SK-N-SH (cell line): ENCODE measurements at regions of chr7 and their contacts with region 1.

Region 1: GRCh38 chr7:157273208-157274093 is 63.4 kb upstream of the DNAJB6 start:
- DNase-seq: peak; percentile 99
- H3K4me3 ChIP-seq: no peak overlapping the region; a peak in 1 of 4 replicates
- H3K27ac ChIP-seq: no peak overlapping the region
- H3K4me1 ChIP-seq: peaks cover 24 to 27% of the 10 kb centered on the region in 2 experiments; a peak in 3 of 4 replicates
- H3K27me3 ChIP-seq: no peaks in the 10 kb centered on the region
- CTCF ChIP-seq: peak; percentile 99
- EP300 ChIP-seq: no peak
- RAD21 ChIP-seq: peak; percentile 97

Region 2: GRCh38 chr7:156969972-156970420 is 303.5 kb before region 1 on chr7:
- CTCF ChIA-PET with region 1: interaction called, 120 read pairs
- POLR2A ChIA-PET with region 1: no interaction called
- DNase-seq: no peak
- H3K4me3 ChIP-seq: no peak overlapping the region
- H3K27ac ChIP-seq: no peak overlapping the region
- H3K4me1 ChIP-seq: no peaks in the 10 kb centered on the region
- H3K27me3 ChIP-seq: no peaks in the 10 kb centered on the region
- CTCF ChIP-seq: peak; percentile 74
- EP300 ChIP-seq: no peak
- RAD21 ChIP-seq: peak; percentile 56

Region 3: DNA sequence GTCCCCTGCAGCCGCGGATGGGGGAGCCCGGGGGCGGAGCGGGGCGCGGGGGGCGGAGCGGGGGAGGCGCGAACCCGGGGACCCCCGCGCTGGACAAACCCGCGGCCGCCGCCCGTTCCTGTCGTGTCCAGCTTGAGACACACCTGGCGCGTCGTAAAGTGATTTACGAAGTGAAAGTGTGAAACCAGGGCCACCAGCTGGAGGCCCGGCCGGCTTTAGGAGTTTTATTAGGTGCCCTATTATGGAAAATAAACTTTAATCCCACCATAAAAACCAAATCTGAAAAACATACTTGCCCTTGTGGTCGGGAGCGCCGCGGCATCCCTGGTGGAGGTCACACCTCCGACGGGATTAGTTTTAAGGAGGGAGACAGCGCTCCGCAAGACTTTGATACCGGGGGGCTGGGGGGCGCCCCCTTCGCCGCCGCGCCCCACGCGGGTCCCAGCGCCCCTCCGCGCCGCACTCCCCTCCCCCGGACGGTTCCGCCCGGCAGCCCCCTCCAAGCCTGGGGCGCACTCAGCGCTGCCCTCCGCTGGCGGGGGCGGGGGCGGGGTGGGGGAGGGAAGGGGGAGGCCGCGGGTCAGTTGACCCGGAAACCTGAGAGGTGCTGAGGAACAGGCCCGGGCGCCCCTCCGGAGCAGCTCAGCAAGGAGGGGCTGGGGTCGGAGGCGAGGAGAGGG is 273.3 kb before region 1 on chr7:
- CTCF ChIA-PET with region 1: interaction called, 15 read pairs
- POLR2A ChIA-PET with region 1: no interaction called
- DNase-seq: peak; percentile 58
- H3K4me3 ChIP-seq: peak overlapping the region; percentile 25 to 38
- H3K27ac ChIP-seq: no peak overlapping the region
- H3K4me1 ChIP-seq: peaks cover 10 to 15% of the 10 kb centered on the region in 2 experiments; a peak in 3 of 4 replicates
- H3K27me3 ChIP-seq: peaks cover 91% of the 10 kb centered on the region
- CTCF ChIP-seq: no peak
- EP300 ChIP-seq: no peak
- RAD21 ChIP-seq: no peak

Region 4: DNA sequence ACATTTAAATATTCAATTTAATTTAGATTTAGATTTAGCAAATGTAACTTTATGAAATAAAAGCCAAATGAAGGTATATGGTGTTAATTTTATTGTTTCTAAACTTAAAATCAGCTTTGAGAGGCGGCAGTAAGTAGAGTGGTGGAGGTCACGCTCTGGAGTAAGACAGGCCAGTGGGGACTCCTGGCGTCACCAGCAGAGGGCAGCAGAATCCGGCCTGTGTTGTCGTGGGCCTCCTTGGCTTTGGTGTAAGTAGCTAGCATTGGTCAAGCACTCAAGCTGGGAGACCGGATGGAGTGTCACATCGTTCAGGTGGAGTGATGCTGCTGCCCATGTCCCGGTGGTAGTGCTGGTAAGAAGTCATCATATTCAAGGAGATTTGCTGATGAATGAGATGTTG is 35.4 kb before region 1 on chr7:
- CTCF ChIA-PET with region 1: interaction called, 16 read pairs
- POLR2A ChIA-PET with region 1: interaction called, 4 read pairs
- DNase-seq: peak; percentile 53
- H3K4me3 ChIP-seq: no peak overlapping the region
- H3K27ac ChIP-seq: no peak overlapping the region
- H3K4me1 ChIP-seq: peaks cover 9 to 11% of the 10 kb centered on the region in 2 experiments
- H3K27me3 ChIP-seq: no peaks in the 10 kb centered on the region
- CTCF ChIP-seq: peak; percentile 58
- EP300 ChIP-seq: no peak
- RAD21 ChIP-seq: peak; percentile 35

Region 5: GRCh38 chr7:157329447-157329846 is 56.0 kb after region 1 on chr7:
- CTCF ChIA-PET with region 1: interaction called, 39 read pairs
- POLR2A ChIA-PET with region 1: no interaction called
- DNase-seq: peak; percentile 85
- H3K4me3 ChIP-seq: no peak overlapping the region
- H3K27ac ChIP-seq: peak overlapping the region in 1 of 2 experiments; percentile 64; a peak in 2 of 4 replicates
- H3K4me1 ChIP-seq: peaks cover 0 to 7% of the 10 kb centered on the region in 2 experiments; a peak in 1 of 4 replicates
- H3K27me3 ChIP-seq: no peaks in the 10 kb centered on the region
- CTCF ChIP-seq: no peak
- EP300 ChIP-seq: peak in 1 of 2 experiments; percentile 57; a peak in 2 of 4 replicates
- RAD21 ChIP-seq: no peak; the same call in 1 of the 2 replicates